Naive thymus-derived CD8-positive, alpha-beta T cell (primary cell): ENCODE measurements at regions of chr2 and their contacts with region 1.

Region 1: GRCh38 chr2:219253753-219254590 is at the start of gene TUBA4A:
- DNase-seq: peak; percentile 86 to 96 (median 91)
- ATAC-seq: peak; percentile 75 to 77
- H3K4me3 Mint-ChIP-seq: peak within 1 kb of the TSS; percentile 78 to 100 (median 94)
- H3K27ac Mint-ChIP-seq: peak within 1 kb of the TSS; percentile 77 to 99 (median 98)
- H3K4me1 Mint-ChIP-seq: peaks cover 22 to 55% (median 48%) of the 10 kb centered on the region in 4 donors
- H3K27me3 Mint-ChIP-seq: no peaks in the 10 kb centered on the region
- polyA plus RNA-seq, gene TUBA4A: 107 to 275 (median 122) TPM

Region 2: DNA sequence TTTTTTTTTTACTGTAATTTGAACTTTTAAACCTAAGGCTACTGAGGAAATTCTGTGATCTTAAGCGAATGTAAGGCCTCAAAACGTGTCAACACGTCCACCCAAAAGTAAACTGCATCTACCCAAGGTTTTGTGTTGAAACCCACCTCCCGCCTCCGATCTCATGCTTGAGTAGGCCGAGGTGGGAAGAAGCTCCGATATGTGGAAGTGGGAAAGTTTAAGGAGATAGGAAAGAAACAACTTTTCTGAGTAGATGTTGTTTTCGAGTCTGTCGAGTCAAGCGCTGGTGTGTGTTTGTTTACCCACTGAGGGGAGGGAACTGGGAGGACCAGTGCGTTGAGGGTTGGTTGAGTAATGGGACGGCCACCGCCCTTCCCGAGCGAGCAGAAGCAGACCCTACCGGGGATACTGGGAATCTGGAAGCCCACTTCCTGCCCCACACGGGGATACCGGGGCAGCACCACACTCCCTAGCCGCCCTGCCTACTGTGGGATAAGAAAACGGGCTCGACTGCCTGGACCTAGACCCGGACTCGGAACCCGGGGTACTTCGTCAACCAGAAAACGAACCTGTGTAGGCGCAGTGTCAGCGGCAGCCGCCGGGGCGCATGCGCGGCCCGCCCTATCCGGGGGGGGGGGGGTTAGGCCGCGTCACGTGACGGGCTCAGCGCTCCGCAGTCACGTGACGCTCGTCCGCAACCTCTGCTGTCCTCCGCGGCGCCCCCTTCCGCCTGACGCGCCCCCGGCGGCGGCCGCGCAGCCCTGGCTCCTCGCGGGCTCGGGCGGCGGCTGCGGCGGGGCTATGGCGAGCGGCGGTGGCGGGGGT is 76.2 kb before region 1 on chr2 and contains the start of gene RETREG2:
- POLR2A ChIA-PET with region 1: interaction called, 111 read pairs
- DNase-seq: peak; percentile 69 to 91 (median 81)
- ATAC-seq: peak; percentile 51 to 55
- H3K4me3 Mint-ChIP-seq: peak within 1 kb of the TSS; percentile 90 to 98 (median 97)
- H3K27ac Mint-ChIP-seq: peak within 1 kb of the TSS; percentile 96 to 99 (median 98)
- H3K4me1 Mint-ChIP-seq: peaks cover 45 to 77% (median 75%) of the 10 kb centered on the region in 4 donors
- H3K27me3 Mint-ChIP-seq: no peaks in the 10 kb centered on the region
- polyA plus RNA-seq, gene RETREG2: 52.0 to 64.3 (median 57.6) TPM

Region 3: DNA sequence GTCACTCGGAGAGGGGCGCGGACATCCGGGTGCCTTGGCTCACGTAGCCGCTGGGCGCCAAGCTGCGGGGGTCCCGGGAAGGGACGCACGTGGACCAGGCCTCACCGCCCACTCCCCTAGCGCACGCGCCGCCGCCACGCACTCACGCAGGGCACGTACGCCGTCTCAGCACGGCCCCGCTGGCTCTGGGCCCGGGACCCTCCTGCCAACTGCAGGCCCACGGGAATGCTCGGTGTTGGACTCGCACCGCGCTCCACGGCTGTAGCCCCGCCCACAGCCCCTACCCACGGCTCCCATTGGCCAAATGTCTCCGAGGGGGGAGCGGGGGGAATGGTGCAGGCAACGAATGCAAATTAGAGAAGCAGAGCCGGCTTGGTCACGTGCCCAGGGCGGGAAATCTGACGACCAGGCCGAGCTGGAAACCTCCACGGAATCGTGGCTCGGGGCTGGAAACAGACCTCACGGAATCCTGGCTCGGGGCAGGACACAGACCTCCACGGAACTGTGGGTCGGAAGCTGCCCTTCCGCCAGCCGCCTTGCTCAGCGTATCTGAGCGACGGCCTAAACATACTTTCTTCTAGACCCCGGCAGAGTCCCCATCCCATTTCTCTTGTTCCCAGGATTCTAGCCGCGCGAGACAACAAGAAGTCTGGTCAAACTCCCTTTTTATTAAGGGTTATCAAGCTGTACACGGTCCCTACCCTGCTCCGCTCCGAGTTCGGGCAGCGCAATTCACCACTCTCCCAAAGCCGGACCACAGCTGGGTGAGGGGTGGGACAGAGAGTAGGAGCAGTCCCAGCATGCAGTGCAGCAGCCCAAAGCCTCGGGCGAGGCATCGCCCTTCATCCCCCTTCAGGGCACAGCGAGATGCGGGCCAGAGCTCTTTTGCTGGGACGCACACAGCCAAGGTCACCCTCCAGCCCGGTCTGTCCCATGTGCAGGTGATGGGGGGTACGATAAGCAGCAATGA is 35.0 kb before region 1 on chr2 and contains the start of gene ABCB6:
- POLR2A ChIA-PET with region 1: interaction called, 134 read pairs
- DNase-seq: peak; percentile 74 to 94 (median 84)
- ATAC-seq: peak; percentile 92
- H3K4me3 Mint-ChIP-seq: peak within 1 kb of the TSS; percentile 75 to 91 (median 82)
- H3K27ac Mint-ChIP-seq: peak within 1 kb of the TSS; percentile 17 to 89 (median 82)
- H3K4me1 Mint-ChIP-seq: peaks cover 17 to 31% (median 26%) of the 10 kb centered on the region in 4 donors
- H3K27me3 Mint-ChIP-seq: no peaks in the 10 kb centered on the region
- polyA plus RNA-seq, gene ABCB6: 1.6 to 4.9 (median 1.8) TPM

Region 4: GRCh38 chr2:219278655-219279516 is 24.9 kb after region 1 on chr2 and contains the start of gene DNAJB2:
- POLR2A ChIA-PET with region 1: interaction called, 170 read pairs
- DNase-seq: peak; percentile 92 to 99 (median 98)
- ATAC-seq: peak; percentile 81 to 87
- H3K4me3 Mint-ChIP-seq: peak within 1 kb of the TSS; percentile 89 to 99 (median 98)
- H3K27ac Mint-ChIP-seq: peak within 1 kb of the TSS; percentile 98 to 100 (median 100)
- H3K4me1 Mint-ChIP-seq: peaks cover 21 to 54% (median 50%) of the 10 kb centered on the region in 4 donors
- H3K27me3 Mint-ChIP-seq: peaks cover 0 to 2% (median 0%) of the 10 kb centered on the region in 5 donors
- polyA plus RNA-seq, gene DNAJB2: 5.0 to 6.6 (median 5.9) TPM

Region 5: GRCh38 chr2:219344751-219345430 is 90.9 kb after region 1 on chr2:
- POLR2A ChIA-PET with region 1: no interaction called
- DNase-seq: no peak
- ATAC-seq: no peak
- H3K4me3 Mint-ChIP-seq: no peak overlapping the region
- H3K27ac Mint-ChIP-seq: no peak overlapping the region
- H3K4me1 Mint-ChIP-seq: peaks cover 0 to 6% (median 4%) of the 10 kb centered on the region in 4 donors
- H3K27me3 Mint-ChIP-seq: peaks cover 14 to 52% (median 29%) of the 10 kb centered on the region in 5 donors

Region 6: DNA sequence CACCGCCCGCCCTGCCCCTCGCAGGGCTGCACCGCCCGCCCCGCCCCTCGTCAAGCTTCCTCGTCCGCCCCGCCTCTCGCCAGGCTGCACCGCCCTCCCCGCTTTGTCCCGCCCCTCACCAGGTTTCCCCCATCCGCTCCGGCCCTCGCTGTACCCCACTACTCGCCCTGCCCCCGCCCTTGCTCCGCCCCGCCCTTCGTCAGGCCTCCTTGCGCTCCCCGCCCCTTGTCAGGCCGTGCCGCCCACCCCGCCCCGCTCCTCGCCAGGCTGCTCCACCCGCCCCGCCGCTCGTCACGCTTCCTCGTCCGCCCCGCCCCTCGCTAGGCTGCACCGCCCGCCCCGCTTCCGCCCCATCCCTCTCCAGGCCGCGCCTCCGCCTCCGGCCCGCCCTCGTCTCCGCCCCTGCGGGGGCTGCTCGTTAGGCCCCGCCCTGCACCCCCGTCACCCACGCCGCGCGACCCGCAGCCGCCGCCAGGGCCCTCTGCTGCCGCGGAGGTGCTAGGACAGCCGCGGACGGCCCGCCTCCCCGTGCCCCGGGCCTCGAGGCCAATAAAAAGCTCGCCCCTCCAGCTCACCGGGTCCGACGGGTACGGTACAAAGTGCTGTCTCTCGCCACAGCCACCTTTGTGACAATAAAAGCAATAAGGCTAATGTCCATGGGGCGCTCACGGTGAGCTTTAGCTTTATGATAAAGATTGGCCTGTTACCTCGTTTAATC is 134.3 kb after region 1 on chr2:
- POLR2A ChIA-PET with region 1: interaction called, 10 read pairs
- DNase-seq: peak; percentile 95 to 100 (median 99)
- ATAC-seq: peak; percentile 78 to 79
- H3K4me3 Mint-ChIP-seq: peak overlapping the region; percentile 63 to 97 (median 75)
- H3K27ac Mint-ChIP-seq: peak overlapping the region; percentile 25 to 96 (median 92)
- H3K4me1 Mint-ChIP-seq: peaks cover 4 to 36% (median 22%) of the 10 kb centered on the region in 4 donors
- H3K27me3 Mint-ChIP-seq: peaks cover 0 to 1% (median 0%) of the 10 kb centered on the region in 5 donors